ENCODE measurements at regions of chr15 and their contacts with region 1.

Region 1: DNA sequence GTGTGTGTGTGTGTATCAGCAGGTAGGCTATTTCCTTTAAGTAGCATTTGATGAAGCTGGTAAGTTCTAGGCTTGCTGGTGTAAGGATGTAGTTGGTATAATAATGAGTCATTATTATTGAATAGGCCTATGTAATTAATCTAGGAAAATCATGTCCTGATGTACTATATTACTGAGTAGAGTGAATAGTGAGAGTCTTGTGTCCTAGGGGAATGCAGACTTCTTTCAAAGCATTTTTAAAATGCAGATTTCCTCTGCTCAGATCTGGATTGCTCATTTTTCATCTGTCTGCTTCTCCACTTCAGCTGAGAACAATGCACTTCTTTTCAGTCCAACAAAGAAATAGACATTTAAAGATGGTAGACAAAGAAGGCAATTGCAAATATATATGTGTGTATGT is 434.2 kb upstream of the ONECUT1 start:
- DNase-seq: no peak
- ATAC-seq: no peak
- H3K4me3 ChIP-seq: no peak overlapping the region
- H3K27ac ChIP-seq: no peak overlapping the region
- H3K4me1 ChIP-seq: no peaks in the 10 kb centered on the region
- H3K27me3 ChIP-seq: no peaks in the 10 kb centered on the region
- CTCF ChIP-seq: no peak

Region 2: DNA sequence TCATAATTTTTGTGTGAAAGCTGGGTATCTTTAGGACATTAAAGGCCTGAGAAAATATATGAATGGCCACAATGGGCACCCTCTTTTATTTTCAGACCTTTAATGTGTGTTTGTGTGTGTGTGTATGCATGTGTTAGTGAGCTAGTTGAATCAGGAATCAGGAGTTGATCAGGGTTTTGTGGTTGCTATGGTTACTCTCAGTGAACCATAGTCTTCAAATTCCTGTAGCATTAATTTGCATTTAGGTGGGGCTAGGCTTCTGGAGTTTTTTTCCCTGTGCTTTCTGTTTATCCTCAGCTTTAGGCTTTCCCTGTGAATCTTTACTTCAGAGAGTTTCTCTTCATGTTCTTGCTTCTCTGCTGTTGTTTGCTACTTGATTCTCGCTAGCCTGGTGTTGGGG is 312.2 kb before region 1 on chr15:
- CTCF ChIA-PET with region 1: no interaction called
- POLR2A ChIA-PET with region 1: interaction called, 10 read pairs
- in situ Hi-C with region 1: no loop called
- intact Hi-C with region 1: no loop called
- DNase-seq: no peak
- ATAC-seq: no peak
- H3K4me3 ChIP-seq: no peak overlapping the region
- H3K27ac ChIP-seq: no peak overlapping the region
- H3K4me1 ChIP-seq: no peaks in the 10 kb centered on the region
- H3K27me3 ChIP-seq: peaks cover 6% of the 10 kb centered on the region
- CTCF ChIP-seq: no peak

Region 3: GRCh38 chr15:53189860-53190259 is 34.5 kb before region 1 on chr15:
- CTCF ChIA-PET with region 1: no interaction called
- POLR2A ChIA-PET with region 1: no interaction called
- in situ Hi-C with region 1: no loop called
- intact Hi-C with region 1: no loop called
- DNase-seq: no peak
- ATAC-seq: no peak
- H3K4me3 ChIP-seq: no peak overlapping the region
- H3K27ac ChIP-seq: no peak overlapping the region
- H3K4me1 ChIP-seq: no peaks in the 10 kb centered on the region
- H3K27me3 ChIP-seq: no peaks in the 10 kb centered on the region
- CTCF ChIP-seq: no peak

Measured in Panc1 (cell line).